ENCODE measurements at regions of chr7 and their contacts with region 1.

Region 1: DNA sequence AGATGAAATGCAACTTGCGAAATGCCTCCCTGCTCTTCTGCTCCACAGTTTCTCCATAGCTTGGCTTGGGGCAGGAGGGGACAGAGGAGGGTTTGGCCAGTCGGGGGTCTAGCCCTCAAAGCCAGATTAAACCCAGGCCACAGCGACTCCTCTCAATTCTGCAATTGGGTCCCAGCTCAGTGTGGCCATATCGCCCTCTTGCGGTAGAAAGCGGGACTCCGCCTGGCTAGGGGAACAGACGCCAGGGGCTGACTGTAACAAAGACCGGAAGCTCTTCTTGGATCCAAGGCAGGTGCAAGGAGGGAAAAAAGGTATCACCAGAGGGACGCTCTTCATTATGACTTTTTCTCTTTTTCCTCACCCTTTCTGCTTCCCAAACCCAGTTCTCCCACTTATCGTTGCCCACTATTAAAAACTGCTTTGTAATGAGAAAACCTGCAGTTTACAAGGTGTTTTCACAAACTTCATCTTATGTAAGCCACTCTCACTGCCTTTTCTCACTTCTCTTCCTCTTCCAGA is 36.6 kb upstream of the TNPO3 start:
- DNase-seq: no peak
- H3K4me3 ChIP-seq: no peak overlapping the region
- H3K27me3 ChIP-seq: peaks cover 3% of the 10 kb centered on the region
- CTCF ChIP-seq: peak; percentile 99

Region 2: GRCh38 chr7:128904381-128905197 is 187.0 kb before region 1 on chr7:
- CTCF ChIA-PET with region 1: interaction called, 77 read pairs
- POLR2A ChIA-PET with region 1: no interaction called
- DNase-seq: no peak
- H3K4me3 ChIP-seq: no peak overlapping the region
- H3K27me3 ChIP-seq: peaks cover 7% of the 10 kb centered on the region
- CTCF ChIP-seq: peak; percentile 63

Region 3: DNA sequence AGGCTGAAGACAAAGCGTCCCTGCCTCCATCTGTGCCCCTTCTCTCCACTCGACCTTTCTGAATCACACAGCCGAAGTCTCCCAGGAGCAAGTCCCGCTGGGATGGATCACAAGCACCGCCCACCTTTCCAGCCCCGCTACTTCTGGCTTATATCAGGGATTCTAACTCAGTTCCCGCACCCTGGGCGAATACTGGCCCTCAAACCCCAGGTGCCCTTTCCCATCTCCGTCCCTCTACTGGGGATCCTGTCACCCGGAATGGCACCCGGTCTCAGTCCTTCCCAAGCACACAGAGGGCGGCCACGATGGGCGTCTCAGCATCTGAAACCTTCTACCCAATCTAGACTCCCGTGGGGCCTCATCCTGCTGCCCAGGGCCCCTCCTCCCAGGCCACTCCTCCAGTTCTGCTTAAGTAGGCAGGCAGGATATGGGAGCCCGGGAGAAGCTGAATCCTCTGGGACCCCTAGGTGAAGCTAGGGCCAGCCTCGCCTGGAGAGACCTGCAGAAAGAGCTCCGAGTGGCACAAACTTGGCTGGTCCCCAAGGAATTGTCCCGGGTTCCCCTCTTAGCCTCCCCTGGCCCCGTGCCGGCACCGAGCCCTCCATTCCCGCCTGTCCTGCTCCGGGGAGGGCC is 181.8 kb before region 1 on chr7:
- CTCF ChIA-PET with region 1: interaction called, 77 read pairs
- POLR2A ChIA-PET with region 1: no interaction called
- DNase-seq: no peak
- H3K4me3 ChIP-seq: peak overlapping the region; percentile 39
- H3K27me3 ChIP-seq: peaks cover 24% of the 10 kb centered on the region
- CTCF ChIP-seq: no peak

Region 4: GRCh38 chr7:129066290-129067131 is 25.0 kb before region 1 on chr7:
- CTCF ChIA-PET with region 1: interaction called, 15 read pairs
- POLR2A ChIA-PET with region 1: no interaction called
- DNase-seq: peak; percentile 90
- H3K4me3 ChIP-seq: no peak overlapping the region
- H3K27me3 ChIP-seq: 0 out of 2 replicates have a peak, but pooled peaks cover 2% of the 10 kb centered on the region
- CTCF ChIP-seq: no peak

Region 5: GRCh38 chr7:129101746-129102145 is 10.2 kb after region 1 on chr7:
- CTCF ChIA-PET with region 1: interaction called, 22 read pairs
- POLR2A ChIA-PET with region 1: no interaction called
- DNase-seq: no peak
- H3K4me3 ChIP-seq: no peak overlapping the region
- H3K27me3 ChIP-seq: peaks cover 7% of the 10 kb centered on the region
- CTCF ChIP-seq: no peak

Measured in BJ (cell line).